HAP-1 (cell line): ENCODE measurements at regions of chr2 and their contacts with region 1.

Region 1: GRCh38 chr2:196798980-196799379 is 503 bp downstream of the GTF3C3 start:
- DNase-seq: no peak
- H3K4me3 ChIP-seq: peak overlapping the region; percentile 90
- H3K4me1 ChIP-seq: no peaks in the 10 kb centered on the region; the same call in 1 of the 2 replicates
- H3K27me3 ChIP-seq: no peaks in the 10 kb centered on the region

Region 2: DNA sequence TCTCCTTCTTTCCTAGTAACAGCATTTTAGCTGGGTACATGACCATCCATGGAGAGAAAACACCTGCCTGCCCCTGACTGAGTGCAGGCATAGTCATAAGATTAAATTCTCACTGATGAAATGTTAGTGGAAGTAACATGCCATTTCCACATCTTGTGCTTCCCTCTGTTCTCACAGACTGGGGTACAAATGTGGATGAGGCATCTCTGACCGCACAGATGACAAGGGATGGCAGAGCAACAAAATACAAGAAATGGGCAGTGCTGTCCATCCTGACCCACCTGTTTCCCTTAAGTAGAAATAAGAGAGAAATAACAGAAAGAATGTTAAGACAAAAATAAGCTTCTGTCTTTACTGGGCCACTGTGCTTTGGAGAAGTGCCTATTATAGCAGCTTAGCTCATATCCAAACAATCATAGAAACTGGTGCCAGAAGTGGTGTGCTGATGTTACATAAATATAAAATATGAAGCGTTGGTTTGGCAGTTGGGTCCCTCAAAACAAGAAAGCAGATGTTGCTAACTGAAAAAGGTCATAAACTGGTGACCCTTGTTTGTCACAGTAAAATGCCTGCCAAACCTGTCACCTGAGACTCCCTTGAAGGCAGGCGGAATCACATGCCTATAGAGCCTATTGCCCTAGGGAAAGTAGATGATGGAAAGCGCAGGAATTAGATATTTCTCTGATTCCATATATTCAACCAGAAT is 231.9 kb before region 1 on chr2:
- in situ Hi-C with region 1: no loop called
- DNase-seq: no peak
- H3K4me3 ChIP-seq: no peak overlapping the region
- H3K4me1 ChIP-seq: no peaks in the 10 kb centered on the region
- H3K27me3 ChIP-seq: peaks cover 7% of the 10 kb centered on the region; the same call in 1 of the 2 replicates

Region 3: DNA sequence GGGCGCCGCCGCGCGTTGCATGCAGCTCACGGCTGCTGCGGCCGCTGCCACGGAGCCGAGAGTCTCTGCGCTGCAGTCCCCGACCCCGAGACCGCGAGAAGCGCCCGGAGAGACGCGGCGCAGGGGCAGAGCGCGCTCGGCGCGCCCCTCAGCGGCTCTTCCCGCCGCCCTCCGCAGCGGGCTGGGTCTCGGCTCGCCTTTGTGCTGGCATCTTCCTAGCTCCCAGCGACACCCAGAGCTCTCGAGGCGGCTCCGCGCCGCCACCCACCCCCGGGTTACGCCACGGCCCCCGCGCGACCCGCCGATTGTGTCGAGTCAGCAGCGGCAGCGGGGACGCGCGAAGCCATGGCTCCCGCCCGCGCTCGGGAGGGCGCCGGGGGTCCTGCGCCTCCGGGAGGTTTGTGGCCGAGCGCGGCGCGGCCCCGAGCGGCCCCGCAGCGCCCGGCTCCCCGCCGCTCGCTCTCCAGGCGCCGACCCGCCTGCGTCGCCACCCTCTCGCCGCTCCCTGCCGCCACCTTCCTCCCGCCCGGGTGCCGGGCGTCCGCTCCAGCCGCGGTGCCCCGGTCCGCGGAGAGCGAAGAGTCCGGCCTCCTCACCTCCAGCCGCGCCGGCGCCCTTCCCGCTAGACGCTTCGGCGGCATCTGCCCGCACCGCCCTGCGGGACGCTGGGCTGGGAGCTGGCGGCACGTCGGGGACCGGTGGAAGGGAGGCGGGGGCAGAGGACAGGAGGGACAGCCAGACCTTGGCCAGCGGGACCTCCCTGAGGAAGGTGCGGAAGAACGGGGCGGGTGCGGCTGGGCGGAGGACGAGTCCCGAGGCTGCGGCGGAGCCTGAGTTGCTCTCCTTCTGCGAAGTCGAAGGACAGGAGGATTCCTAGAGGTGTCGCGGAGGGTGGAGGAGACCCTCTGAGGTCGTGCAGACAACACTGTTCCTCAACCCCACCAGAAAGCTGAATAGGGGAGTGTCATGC is 205.8 kb before region 1 on chr2:
- in situ Hi-C with region 1: no loop called
- DNase-seq: peak; percentile 30 to 54
- H3K4me3 ChIP-seq: peak within 1 kb of the TSS; percentile 39
- H3K4me1 ChIP-seq: no peaks in the 10 kb centered on the region
- H3K27me3 ChIP-seq: peaks cover 29% of the 10 kb centered on the region

Region 4: GRCh38 chr2:197378494-197379307 is 579.7 kb after region 1 on chr2:
- in situ Hi-C with region 1: loop called (anchors 25 kb)
- DNase-seq: peak; percentile 48 to 69
- H3K4me3 ChIP-seq: no peak overlapping the region
- H3K4me1 ChIP-seq: no peaks in the 10 kb centered on the region
- H3K27me3 ChIP-seq: no peaks in the 10 kb centered on the region